GM13976 (cell line): ENCODE measurements at regions of chr15 and their contacts with region 1.

Region 1: GRCh38 chr15:40906091-40906990 is 12.1 kb downstream of the VPS18 start:
- DNase-seq: peak; percentile 88
- CTCF ChIP-seq: peak; percentile 79

Region 2: DNA sequence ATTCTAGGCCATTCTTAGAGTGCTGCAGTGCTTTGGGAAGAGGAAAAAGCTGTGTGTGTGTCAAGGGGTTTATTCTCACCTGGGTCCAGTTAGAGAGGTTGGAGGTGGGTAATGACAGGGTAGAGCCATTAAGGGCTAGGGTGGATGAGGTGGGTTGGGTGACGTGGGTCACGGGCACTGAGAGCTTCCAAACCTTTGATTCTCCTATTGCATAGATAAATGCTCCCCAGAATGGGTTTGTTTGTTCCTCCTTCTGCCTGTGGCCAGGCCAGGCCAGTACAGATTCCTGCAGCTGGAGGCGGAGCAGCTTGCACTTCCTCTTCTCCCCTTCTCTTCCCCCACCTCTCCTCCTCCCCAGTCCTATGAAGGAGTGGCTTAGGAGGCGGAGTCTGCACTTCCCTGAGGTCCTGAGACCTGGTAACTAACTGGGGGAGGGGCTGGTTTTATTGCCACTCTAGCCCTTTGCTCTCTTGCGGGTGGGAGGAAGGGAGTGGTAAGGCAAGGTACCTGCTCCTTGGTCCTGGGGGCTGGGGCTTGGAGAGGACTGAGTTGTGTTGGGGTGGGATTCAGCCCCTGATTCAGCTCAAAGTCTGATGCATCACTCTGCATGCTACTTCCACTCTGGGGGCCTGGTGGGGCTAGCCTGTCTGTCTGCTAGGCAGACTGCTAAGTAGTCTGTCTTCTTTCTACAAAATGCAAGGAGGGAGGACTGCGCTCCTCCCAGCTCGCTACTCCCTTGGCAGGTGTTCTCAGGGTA is 59.0 kb before region 1 on chr15:
- in situ Hi-C with region 1: no loop called
- DNase-seq: peak; percentile 81
- CTCF ChIP-seq: no peak

Region 3: DNA sequence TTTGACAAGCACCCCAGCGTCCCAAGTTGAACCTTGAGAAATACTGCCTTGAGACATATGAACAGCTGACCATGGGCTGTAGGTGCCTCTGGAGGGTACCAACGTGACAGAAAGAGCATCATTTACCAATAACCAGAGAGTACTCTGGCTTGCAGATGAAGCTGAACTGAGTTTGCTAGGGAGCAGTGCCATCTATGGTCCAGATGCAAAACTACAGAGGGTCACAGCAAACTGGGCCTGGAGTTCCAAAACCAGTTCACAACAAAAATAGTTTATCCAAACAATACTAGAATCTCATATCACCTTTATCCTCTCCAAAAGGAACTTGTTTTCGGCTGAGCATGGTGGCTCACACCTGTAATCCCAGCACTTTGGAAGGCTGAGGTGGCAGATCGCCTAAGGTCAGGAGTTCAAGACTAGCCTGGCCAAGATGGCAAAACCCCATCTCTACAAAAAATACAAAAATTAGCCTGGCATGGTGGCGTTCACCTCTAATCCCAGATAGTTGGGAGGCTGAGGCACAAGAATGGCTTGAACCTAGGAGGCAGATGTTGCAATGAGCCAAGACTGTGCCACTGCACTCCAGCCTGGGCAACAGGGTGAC is 116.2 kb after region 1 on chr15:
- in situ Hi-C with region 1: loop called (anchors 25 kb)
- DNase-seq: peak; percentile 54
- CTCF ChIP-seq: peak; percentile 55